ENCODE measurements at regions of chr1 and their contacts with region 1.

Region 1: DNA sequence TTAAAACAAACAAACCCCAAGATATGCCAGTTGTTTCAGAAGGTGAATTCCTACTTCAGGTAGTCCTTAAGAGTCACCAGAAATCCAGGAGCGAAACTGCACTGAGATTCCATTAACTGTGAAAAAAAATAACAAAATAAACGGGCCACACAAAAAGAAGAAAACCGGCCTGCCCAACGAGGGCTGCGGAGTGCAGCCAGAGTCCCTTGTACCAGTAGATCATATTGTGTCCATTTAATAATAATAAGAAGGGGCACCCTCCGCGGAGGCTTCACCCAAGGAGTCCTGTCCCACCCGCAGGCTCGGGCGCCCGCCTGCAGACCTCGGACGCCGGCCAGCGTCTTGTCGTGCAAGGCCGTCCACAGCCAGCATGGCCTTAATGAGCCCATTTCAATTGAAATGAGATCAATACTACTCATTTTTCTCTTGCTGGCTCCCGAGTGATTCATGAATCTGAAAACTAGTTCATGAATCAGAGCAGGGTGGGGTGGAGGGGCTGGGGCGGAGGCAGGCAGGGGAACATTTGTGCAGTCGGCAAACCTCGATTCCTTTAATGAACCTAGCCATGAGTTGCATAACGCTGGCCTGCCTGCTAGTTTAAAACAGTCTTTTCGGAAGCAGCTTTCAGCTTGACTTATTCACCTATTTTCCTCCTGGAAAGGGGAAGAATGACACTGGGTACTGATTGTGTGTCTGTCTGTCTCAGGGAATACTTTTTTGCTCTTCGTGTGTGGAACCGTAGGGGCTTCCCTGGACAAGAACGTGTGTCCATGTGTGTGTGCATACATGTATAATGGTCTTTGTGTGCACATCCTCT is 113.1 kb upstream of the IRF2BP2 start:
- DNase-seq: peak; percentile 72
- H3K4me3 Mint-ChIP-seq: peak overlapping the region; percentile 27
- H3K27ac Mint-ChIP-seq: peak overlapping the region; percentile 85
- H3K4me1 Mint-ChIP-seq: peaks cover 98% of the 10 kb centered on the region
- H3K27me3 Mint-ChIP-seq: no peaks in the 10 kb centered on the region
- CTCF ChIP-seq: no peak

Region 2: GRCh38 chr1:234499119-234499942 is 223.8 kb before region 1 on chr1:
- CTCF ChIA-PET with region 1: interaction called, 5 read pairs
- intact Hi-C with region 1: loop called (anchors 2 kb)
- DNase-seq: peak; percentile 95
- H3K4me3 Mint-ChIP-seq: peak overlapping the region; percentile 51
- H3K27ac Mint-ChIP-seq: peak overlapping the region; percentile 97
- H3K4me1 Mint-ChIP-seq: peaks cover 87% of the 10 kb centered on the region
- H3K27me3 Mint-ChIP-seq: no peaks in the 10 kb centered on the region
- CTCF ChIP-seq: peak; percentile 93

Region 3: GRCh38 chr1:234631721-234632125 is 91.4 kb before region 1 on chr1:
- CTCF ChIA-PET with region 1: interaction called, 22 read pairs
- intact Hi-C with region 1: loop called (anchors 1 kb)
- DNase-seq: peak; percentile 88
- H3K4me3 Mint-ChIP-seq: no peak overlapping the region
- H3K27ac Mint-ChIP-seq: peak overlapping the region; percentile 96
- H3K4me1 Mint-ChIP-seq: peaks cover 44% of the 10 kb centered on the region
- H3K27me3 Mint-ChIP-seq: no peaks in the 10 kb centered on the region
- CTCF ChIP-seq: no peak

Region 4: DNA sequence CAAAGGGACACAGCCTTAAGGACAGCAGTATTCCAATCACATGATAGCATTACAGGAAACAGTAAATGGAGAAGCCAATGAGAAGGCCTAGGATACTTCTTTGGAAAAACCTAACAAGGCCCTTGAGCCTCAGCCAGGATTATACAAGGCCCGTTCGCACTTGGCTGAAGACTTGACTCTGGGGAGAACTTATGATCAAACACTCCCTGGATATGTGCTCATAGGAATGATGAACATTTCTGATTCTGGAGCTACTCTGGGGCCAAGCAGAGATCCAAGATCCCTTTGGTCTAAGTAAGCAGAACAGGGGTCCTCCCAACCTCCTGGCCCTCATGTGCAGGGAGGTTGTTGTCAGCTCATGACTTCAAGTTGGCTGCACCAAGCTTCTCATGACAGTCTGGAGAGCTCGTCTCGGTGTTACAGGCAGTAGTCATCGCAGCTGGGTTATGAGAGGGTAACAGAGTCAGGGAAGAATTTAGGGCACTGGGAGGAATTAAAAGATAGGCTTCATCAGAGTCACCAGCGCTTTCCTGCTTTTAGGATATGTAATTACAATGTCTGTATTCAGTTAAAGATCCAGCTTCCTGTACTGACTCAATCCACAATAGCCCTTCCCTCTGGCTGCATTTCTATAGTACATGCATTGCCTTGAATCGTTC is 20.6 kb before region 1 on chr1:
- CTCF ChIA-PET with region 1: interaction called, 14 read pairs
- intact Hi-C with region 1: no loop called
- DNase-seq: no peak
- H3K4me3 Mint-ChIP-seq: no peak overlapping the region
- H3K27ac Mint-ChIP-seq: no peak overlapping the region
- H3K4me1 Mint-ChIP-seq: peaks cover 49% of the 10 kb centered on the region
- H3K27me3 Mint-ChIP-seq: no peaks in the 10 kb centered on the region
- CTCF ChIP-seq: no peak

Region 5: GRCh38 chr1:234772345-234773147 is 49.4 kb after region 1 on chr1:
- CTCF ChIA-PET with region 1: interaction called, 5 read pairs
- intact Hi-C with region 1: loop called (anchors 2 kb)
- DNase-seq: peak; percentile 93
- H3K4me3 Mint-ChIP-seq: peak overlapping the region; percentile 34
- H3K27ac Mint-ChIP-seq: peak overlapping the region; percentile 93
- H3K4me1 Mint-ChIP-seq: peaks cover 32% of the 10 kb centered on the region
- H3K27me3 Mint-ChIP-seq: no peaks in the 10 kb centered on the region
- CTCF ChIP-seq: no peak

Region 6: GRCh38 chr1:234902774-234903547 is 179.8 kb after region 1 on chr1:
- CTCF ChIA-PET with region 1: interaction called, 3 read pairs
- intact Hi-C with region 1: loop called (anchors 1 kb)
- DNase-seq: no peak
- H3K4me3 Mint-ChIP-seq: no peak overlapping the region
- H3K27ac Mint-ChIP-seq: no peak overlapping the region
- H3K4me1 Mint-ChIP-seq: peaks cover 18% of the 10 kb centered on the region
- H3K27me3 Mint-ChIP-seq: no peaks in the 10 kb centered on the region
- CTCF ChIP-seq: no peak

Region 7: GRCh38 chr1:234980645-234981396 is 257.7 kb after region 1 on chr1:
- CTCF ChIA-PET with region 1: interaction called, 10 read pairs
- intact Hi-C with region 1: loop called (anchors 5 kb)
- DNase-seq: peak; percentile 78
- H3K4me3 Mint-ChIP-seq: peak overlapping the region; percentile 47
- H3K27ac Mint-ChIP-seq: peak overlapping the region; percentile 97
- H3K4me1 Mint-ChIP-seq: peaks cover 65% of the 10 kb centered on the region
- H3K27me3 Mint-ChIP-seq: no peaks in the 10 kb centered on the region
- CTCF ChIP-seq: no peak